WTC11 (cell line): ENCODE measurements at regions of chr5 and their contacts with region 1.

Region 1: DNA sequence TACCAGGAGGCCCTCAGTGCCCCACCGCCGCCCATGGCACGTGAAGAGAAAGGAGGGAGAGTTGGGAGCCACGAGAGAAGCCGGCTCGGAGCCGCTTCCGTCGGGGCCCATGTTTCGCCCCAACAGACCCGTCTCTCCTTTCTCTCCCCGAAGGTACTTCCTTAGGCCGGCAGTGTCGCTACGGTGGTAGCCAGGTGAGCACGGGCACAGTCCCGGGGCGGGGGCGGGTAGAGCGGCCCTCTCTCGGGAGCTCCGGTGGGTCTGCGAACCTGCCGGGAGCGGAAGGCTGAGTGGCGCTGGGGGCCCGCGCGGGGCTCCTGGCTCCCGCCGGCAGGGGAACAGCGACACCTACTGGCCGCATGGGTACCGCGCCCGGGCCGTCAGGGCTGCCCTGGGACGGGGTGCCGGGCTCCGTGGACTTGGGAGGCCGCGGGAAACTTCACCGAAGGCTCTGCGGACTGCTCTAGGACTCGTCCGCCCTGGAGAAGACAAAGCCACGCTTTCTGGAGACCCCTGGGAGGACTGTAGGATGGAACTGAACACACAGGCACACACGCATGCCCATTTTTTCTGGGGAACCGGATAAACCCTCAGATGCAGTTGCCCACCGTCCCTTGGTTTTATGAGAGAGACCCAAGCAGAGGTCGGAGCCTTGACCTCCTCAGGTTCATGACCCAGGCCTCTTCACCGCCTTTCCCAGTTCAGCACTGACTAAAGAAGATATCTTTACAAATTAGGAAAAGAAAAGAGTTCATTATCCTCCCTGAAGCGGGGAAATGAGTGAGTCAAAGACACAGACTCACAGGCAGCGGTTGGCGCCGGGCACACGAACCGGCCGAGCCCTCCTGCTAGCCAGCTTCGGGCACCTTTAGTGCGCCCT is 202.5 kb downstream of the MEF2C start:
- DNase-seq: peak; percentile 90
- ATAC-seq: peak; percentile 38
- H3K4me3 Mint-ChIP-seq: peak overlapping the region; percentile 61
- H3K27ac Mint-ChIP-seq: no peak overlapping the region
- H3K4me1 Mint-ChIP-seq: peaks cover 53% of the 10 kb centered on the region
- H3K27me3 Mint-ChIP-seq: peaks cover 98% of the 10 kb centered on the region
- CTCF ChIP-seq: peak; percentile 97

Region 2: GRCh38 chr5:88140856-88141752 is 539.4 kb before region 1 on chr5:
- CTCF ChIA-PET with region 1: interaction called, 14 read pairs
- POLR2A ChIA-PET with region 1: interaction called, 4 read pairs
- DNase-seq: peak; percentile 99
- ATAC-seq: peak; percentile 89
- H3K4me3 Mint-ChIP-seq: no peak overlapping the region
- H3K27ac Mint-ChIP-seq: no peak overlapping the region
- H3K4me1 Mint-ChIP-seq: peaks cover 12% of the 10 kb centered on the region; the same call in 1 of the 2 replicates
- H3K27me3 Mint-ChIP-seq: peaks cover 7% of the 10 kb centered on the region; the same call in 1 of the 2 replicates
- CTCF ChIP-seq: peak; percentile 82

Region 3: DNA sequence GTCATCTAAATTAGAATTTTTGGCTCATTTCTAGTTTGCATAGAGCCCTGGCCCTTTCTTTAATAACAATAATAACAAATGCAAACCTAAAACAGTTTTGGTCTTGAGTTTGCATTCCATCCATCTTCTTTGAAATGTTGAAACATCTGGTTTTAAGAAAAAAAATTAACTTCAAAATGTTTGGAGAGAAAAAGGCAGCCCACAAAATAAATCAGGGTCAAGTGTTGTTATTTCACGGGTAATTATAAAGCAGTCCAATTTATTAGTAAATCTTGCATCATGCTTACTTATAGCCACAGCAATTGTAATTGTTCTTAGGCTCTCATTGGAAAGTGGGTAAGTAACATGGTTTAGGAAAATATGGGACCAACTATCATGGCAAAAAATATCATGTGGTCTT is 449.4 kb after region 1 on chr5:
- CTCF ChIA-PET with region 1: no interaction called
- POLR2A ChIA-PET with region 1: no interaction called
- DNase-seq: no peak
- ATAC-seq: no peak
- H3K4me3 Mint-ChIP-seq: no peak overlapping the region
- H3K27ac Mint-ChIP-seq: no peak overlapping the region
- H3K4me1 Mint-ChIP-seq: peaks cover 11% of the 10 kb centered on the region
- H3K27me3 Mint-ChIP-seq: no peaks in the 10 kb centered on the region
- CTCF ChIP-seq: no peak